Psoas muscle (tissue), 8 donors: ENCODE measurements at regions of chr6 and their contacts with region 1.

Region 1: DNA sequence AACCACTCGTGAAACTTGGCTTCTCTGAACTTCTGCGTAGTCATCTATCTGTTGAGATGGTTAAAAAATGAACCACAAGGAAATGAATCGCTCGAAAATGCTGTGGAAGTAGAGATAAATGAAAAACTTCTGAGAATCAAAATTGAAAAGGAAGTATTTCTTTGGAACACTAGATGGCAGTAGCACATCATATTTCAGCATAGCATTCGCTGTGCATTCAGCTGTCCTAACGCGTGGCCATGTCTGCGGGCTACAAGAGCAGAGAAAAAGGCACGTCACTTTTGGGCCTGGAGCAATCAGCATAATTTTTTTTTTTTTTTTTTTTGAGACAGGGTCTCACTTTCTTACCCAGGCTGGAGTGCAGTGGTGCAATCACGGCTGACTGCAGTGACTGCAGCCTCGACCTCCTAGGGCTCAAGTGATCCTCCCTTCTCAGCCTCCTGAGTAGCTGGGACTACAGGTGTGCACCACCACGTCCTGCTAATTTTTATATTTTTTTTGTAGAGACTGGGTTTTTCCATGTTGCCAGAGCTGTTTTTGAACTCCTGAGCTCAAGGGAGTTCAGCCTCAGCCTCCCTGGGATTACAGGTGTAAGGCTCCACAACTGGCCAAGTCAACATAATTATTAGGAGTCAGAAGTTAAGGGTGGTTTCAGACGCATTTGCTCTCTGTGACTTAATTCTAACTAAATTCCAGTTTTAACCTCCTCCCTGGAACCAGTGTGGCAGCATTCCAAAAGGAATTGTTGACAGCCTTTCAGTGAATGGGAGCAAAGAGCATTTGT is 8.8 kb upstream of the PERP start:
- DNase-seq: peak; percentile 26 to 66
- ATAC-seq: peak; percentile 76 to 96 (median 89)
- H3K4me3 ChIP-seq: no peak overlapping the region
- H3K27ac ChIP-seq: no peak overlapping the region
- H3K4me1 ChIP-seq: peaks cover 2% of the 10 kb centered on the region
- H3K27me3 ChIP-seq: peaks cover 0 to 9% (median 7%) of the 10 kb centered on the region in 3 donors
- CTCF ChIP-seq: peak; percentile 78

Region 2: GRCh38 chr6:137700751-137701477 is 415.2 kb before region 1 on chr6:
- intact Hi-C with region 1: loop called in 1 of 2 experiments (anchors 5 kb)
- DNase-seq: no peak
- ATAC-seq: no peak
- H3K4me3 ChIP-seq: no peak overlapping the region
- H3K27ac ChIP-seq: no peak overlapping the region
- H3K4me1 ChIP-seq: peaks cover 21% of the 10 kb centered on the region
- H3K27me3 ChIP-seq: no peaks in the 10 kb centered on the region
- CTCF ChIP-seq: no peak

Region 3: GRCh38 chr6:138231381-138231897 is 115.4 kb after region 1 on chr6:
- intact Hi-C with region 1: no loop called
- DNase-seq: no peak
- ATAC-seq: no peak
- H3K4me3 ChIP-seq: no peak overlapping the region
- H3K27ac ChIP-seq: no peak overlapping the region
- H3K4me1 ChIP-seq: no peaks in the 10 kb centered on the region
- H3K27me3 ChIP-seq: no peaks in the 10 kb centered on the region
- CTCF ChIP-seq: no peak

Region 4: GRCh38 chr6:138403801-138404661 is 288.0 kb after region 1 on chr6 and contains the start of gene HEBP2:
- intact Hi-C with region 1: loop called (anchors 2 to 10 kb)
- DNase-seq: peak; percentile 95 to 98
- ATAC-seq: peak; percentile 94 to 97 (median 96)
- H3K4me3 ChIP-seq: peak within 1 kb of the TSS; percentile 97
- H3K27ac ChIP-seq: peak within 1 kb of the TSS; percentile 92
- H3K4me1 ChIP-seq: peaks cover 9% of the 10 kb centered on the region
- H3K27me3 ChIP-seq: no peaks in the 10 kb centered on the region
- CTCF ChIP-seq: peak; percentile 68
- total RNA-seq, gene HEBP2: 83.9 to 133 (median 109) TPM

Region 5: GRCh38 chr6:138514860-138515540 is 398.9 kb after region 1 on chr6:
- intact Hi-C with region 1: loop called in 1 of 2 experiments (anchors 5 kb)
- DNase-seq: no peak
- ATAC-seq: no peak
- H3K4me3 ChIP-seq: no peak overlapping the region
- H3K27ac ChIP-seq: no peak overlapping the region
- H3K4me1 ChIP-seq: no peaks in the 10 kb centered on the region
- H3K27me3 ChIP-seq: peaks cover 0 to 2% (median 0%) of the 10 kb centered on the region in 3 donors
- CTCF ChIP-seq: no peak

Region 6: DNA sequence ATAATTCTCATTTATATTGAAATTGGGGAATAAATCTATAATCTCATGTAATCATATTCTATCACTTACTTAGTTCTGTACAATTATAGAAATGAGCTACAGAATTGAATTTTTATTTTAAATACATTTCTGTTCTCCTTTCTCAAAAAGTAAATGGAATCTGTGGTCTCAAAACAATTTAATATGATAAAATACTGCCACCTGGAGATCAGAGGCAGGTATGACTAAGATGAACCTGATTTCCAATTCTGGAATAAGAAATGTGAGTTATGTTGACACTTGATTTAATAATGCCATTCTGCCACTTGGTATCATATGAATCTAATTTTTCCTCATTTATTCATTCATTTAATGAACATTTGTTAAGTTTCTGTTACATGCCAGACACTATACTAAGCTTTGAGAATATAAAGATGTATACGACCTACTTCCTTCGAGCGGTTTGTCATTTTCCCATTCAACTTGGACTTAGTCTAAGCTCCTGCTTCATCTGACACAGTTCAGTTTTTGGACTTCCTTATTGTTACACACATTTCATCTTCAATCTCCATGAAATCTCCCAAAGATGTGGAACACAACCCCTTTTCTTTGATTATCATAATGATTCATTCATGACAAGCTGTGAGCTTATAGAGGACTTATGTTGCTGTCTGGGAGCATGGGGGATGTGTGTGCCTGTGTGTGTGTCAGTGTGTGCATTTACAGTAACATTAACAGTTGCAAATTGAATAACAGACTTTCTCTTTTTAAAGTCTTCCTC is 650.0 kb after region 1 on chr6:
- intact Hi-C with region 1: loop called (anchors 2 to 5 kb)
- DNase-seq: no peak
- ATAC-seq: peak in 1 of 4 donors; percentile 59
- H3K4me3 ChIP-seq: no peak overlapping the region
- H3K27ac ChIP-seq: no peak overlapping the region
- H3K4me1 ChIP-seq: no peaks in the 10 kb centered on the region
- H3K27me3 ChIP-seq: no peaks in the 10 kb centered on the region
- CTCF ChIP-seq: peak; percentile 68